MCF 10A (cell line): ENCODE measurements at regions of chr14 and their contacts with region 1.

Region 1: DNA sequence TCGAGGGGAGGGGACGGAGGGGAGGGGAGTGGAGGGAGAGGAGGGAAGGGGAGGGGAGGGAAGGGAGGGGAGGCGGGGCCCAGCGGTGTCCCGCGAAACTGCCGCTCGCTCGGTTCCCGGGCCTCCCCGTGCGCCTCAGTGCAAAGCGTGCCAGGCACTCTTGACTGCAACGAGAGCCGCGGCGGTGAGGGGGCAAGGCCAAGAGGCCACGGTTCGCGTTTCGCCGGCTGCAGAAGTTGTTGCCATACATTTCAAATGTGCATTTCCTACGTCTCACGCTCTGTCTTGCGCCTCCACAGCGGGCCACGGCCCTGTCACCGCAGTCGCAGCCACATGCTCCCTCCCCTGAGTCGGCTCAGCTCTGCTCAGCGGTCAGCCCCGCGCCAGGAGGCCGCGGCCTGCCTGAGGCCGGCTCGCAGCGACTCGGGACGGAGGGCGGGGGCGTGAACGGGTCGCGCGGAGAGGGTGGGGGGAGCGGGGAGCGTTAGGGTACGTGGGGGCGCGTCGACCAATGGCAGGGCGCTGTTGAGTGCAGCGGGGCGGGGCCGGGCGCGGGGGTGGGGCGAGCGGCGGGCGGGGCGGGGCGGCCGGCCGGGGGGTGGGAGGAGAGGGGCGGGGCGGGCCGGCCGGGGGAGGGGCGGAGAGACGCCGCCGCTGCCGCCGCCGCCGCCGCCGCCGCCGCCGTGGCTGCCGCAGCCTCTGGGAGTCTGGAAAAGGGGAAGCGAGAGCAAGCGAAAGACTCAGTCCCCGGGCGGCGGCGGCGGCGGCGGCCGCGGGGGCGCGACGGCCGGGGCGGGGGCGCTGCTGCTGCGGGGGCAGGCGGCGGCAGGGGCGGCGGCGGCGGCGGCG is at the start of gene PPP2R5C:
- DNase-seq: peak; percentile 87
- H3K4me3 Mint-ChIP-seq: peak within 1 kb of the TSS; percentile 76
- H3K27ac Mint-ChIP-seq: no peak within 1 kb of the TSS
- H3K4me1 Mint-ChIP-seq: peaks cover 20% of the 10 kb centered on the region
- H3K27me3 Mint-ChIP-seq: no peaks in the 10 kb centered on the region
- CTCF ChIP-seq: no peak
- total RNA-seq, gene PPP2R5C: 118 and 122 TPM in 2 replicates

Region 2: DNA sequence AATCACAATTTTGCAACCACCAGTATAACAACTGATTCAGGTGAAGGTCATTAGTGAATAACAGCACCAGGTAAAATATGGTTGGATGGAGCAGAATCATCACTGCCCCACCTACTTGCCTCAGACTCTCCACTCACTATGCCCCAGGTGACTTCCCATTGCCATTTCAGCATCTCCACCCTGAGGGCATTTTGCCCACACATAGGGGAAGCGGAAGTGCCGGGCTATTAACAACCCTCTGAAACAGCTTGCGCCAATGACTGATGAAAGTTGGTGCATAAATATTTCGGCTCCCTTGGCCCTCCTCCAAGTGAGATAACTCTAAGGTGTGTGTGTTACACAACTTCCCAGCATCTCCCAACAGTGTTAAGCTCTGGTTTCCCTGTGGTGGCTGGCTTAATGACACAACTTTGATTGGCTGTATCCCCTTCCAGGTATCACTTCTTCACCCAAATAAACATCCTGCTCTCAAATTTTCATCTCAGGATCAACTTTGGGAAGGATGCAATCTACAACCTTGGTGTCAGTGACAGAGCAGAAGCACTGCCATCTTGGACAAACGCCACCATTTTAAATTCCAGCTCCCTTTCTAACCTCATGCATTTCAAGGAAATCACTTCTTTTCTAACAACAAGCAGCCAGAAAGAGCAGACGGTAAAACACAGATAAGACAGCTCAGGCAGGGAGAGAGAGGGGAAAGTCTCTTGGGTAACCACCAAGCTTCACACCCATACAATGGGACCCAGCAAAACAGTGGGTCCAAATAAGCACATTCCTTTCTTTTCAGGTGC is 73.3 kb before region 1 on chr14:
- CTCF ChIA-PET with region 1: no interaction called
- POLR2A ChIA-PET with region 1: no interaction called
- intact Hi-C with region 1: no loop called
- DNase-seq: peak; percentile 78
- H3K4me3 Mint-ChIP-seq: no peak overlapping the region
- H3K27ac Mint-ChIP-seq: no peak overlapping the region
- H3K4me1 Mint-ChIP-seq: no peaks in the 10 kb centered on the region
- H3K27me3 Mint-ChIP-seq: peaks cover 22% of the 10 kb centered on the region
- CTCF ChIP-seq: no peak

Region 3: DNA sequence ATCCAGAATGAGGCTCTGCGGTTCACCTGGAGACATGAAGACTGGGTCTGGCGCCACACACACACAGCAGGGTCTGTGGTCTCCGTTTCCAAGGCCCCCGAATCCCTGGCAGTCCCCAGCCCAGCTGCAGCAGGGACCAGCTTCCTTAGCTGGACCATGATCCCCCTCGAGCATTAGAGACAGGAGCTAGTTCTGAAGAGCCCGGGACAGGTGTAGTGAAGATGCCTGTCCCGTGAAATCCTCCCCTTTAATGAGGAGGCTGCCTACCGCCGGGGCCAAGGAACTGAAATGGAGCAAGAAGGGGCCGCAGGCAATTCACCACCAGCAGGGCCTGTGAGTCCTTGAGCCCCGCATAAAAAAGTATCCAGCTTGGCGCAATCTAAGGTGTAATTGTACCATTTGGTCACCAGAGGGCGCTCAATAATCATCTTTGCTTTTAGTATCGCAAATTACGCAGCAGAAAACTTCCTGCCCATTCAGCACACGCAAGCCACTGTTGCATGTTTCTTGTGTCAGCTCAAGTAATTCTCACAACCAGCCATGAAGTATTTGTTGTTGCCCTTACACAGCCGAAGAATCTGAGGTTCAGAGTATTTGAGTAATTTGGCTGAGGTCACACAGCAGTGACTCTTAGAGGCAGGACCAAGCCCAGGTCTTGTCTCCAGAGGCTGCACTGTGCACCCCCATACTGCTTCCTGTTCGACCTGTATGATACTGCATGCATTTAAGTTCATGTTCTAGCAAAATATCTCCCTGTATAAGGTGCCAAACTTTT is 54.0 kb before region 1 on chr14:
- CTCF ChIA-PET with region 1: interaction called, 5 read pairs
- POLR2A ChIA-PET with region 1: interaction called, 9 read pairs
- intact Hi-C with region 1: loop called (anchors 1 kb)
- DNase-seq: peak; percentile 88
- H3K4me3 Mint-ChIP-seq: no peak overlapping the region
- H3K27ac Mint-ChIP-seq: no peak overlapping the region
- H3K4me1 Mint-ChIP-seq: peaks cover 6% of the 10 kb centered on the region
- H3K27me3 Mint-ChIP-seq: peaks cover 25% of the 10 kb centered on the region
- CTCF ChIP-seq: peak; percentile 86

Region 4: DNA sequence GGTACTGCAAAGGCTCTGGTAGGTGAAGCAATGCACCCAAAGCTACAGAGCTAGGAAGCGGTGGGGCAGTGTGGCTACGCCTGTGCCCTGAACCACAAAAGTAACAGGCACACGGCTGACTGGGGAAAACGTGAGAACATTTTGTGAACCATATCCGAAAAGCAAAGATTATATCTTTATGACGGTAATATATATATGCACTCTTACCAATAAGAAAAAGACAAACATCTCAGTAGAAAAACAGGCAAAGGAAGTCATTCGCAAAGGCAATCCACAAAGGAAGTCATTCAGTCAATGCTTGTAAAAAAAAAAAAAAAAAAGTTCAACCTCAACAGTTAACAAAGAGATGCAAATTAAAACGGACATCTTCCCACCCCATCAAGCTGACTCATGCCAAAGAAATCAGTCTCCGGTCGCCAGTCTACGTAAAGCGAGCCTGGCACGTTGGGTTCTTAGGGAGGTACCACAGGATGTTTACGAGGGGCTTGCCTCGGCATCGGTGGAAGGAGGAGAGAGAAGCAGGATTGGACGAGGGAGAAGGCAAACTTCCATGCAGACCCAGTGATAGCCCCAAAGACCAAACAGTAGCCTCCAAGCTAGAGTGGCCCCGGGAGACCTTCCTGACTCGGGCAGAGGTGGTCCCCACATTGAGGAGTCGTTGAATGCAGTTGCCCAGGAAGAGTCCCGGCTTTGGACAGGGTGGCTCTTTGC is 39.1 kb before region 1 on chr14:
- CTCF ChIA-PET with region 1: no interaction called
- POLR2A ChIA-PET with region 1: interaction called, 6 read pairs
- intact Hi-C with region 1: loop called (anchors 5 kb)
- DNase-seq: peak; percentile 81
- H3K4me3 Mint-ChIP-seq: peak overlapping the region; percentile 50
- H3K27ac Mint-ChIP-seq: peak overlapping the region; percentile 88
- H3K4me1 Mint-ChIP-seq: peaks cover 10% of the 10 kb centered on the region
- H3K27me3 Mint-ChIP-seq: no peaks in the 10 kb centered on the region
- CTCF ChIP-seq: no peak

Region 5: GRCh38 chr14:101731187-101732080 is 29.8 kb before region 1 on chr14:
- CTCF ChIA-PET with region 1: interaction called, 3 read pairs
- POLR2A ChIA-PET with region 1: interaction called, 50 read pairs
- intact Hi-C with region 1: loop called (anchors 2 kb)
- DNase-seq: peak; percentile 98
- H3K4me3 Mint-ChIP-seq: peak overlapping the region; percentile 71
- H3K27ac Mint-ChIP-seq: peak overlapping the region; percentile 96
- H3K4me1 Mint-ChIP-seq: peaks cover 14% of the 10 kb centered on the region
- H3K27me3 Mint-ChIP-seq: no peaks in the 10 kb centered on the region
- CTCF ChIP-seq: no peak

Region 6: GRCh38 chr14:101774006-101774795 is 12.9 kb after region 1 on chr14:
- CTCF ChIA-PET with region 1: interaction called, 10 read pairs
- POLR2A ChIA-PET with region 1: interaction called, 10 read pairs
- intact Hi-C with region 1: no loop called
- DNase-seq: no peak
- H3K4me3 Mint-ChIP-seq: no peak overlapping the region
- H3K27ac Mint-ChIP-seq: no peak overlapping the region
- H3K4me1 Mint-ChIP-seq: peaks cover 14% of the 10 kb centered on the region
- H3K27me3 Mint-ChIP-seq: no peaks in the 10 kb centered on the region
- CTCF ChIP-seq: no peak

Region 7: DNA sequence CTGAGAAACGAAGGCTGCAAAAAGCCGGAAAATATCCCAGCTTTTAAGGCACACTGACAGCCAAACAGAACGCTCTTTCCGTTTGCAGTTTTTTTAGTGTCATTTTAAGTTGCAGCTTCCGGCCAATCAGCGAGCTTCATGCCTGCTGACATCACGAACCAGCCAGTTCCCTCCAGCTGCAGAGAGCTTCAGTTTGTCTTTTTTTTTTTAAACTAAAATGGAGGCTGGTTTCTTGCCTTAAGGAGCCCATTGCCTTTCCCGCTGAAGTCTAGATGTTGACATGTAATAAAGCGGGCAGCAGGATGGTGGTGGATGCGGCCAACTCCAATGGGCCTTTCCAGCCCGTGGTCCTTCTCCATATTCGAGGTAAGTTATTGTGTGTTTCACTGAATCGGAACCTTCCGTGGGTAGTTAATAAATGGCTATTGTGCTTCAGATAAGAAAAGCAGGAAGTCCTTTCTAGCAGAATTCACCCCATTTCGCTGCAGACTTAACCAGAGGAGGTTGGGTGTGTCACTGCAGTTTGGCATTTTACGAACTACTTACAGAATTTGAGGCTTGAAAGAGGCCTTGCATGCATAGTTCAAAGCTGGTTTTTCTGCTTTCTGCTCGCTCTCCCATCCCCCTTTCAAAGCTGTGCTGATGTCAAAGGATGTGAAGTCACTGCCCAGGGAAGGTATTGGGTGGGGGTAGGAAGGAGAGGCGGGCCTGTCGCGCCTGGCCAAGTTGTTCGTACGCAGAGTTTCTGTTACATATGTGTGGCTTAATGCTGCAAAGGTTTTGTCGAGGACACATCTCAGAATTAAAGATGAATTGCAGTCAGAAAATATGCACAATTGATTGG is 48.6 kb after region 1 on chr14:
- CTCF ChIA-PET with region 1: no interaction called
- POLR2A ChIA-PET with region 1: interaction called, 32 read pairs
- intact Hi-C with region 1: no loop called
- DNase-seq: peak; percentile 92
- H3K4me3 Mint-ChIP-seq: peak overlapping the region; percentile 96
- H3K27ac Mint-ChIP-seq: peak overlapping the region; percentile 98
- H3K4me1 Mint-ChIP-seq: peaks cover 19% of the 10 kb centered on the region
- H3K27me3 Mint-ChIP-seq: no peaks in the 10 kb centered on the region
- CTCF ChIP-seq: no peak